Activated CD4-positive, alpha-beta memory T cell treated with anti-CD3 and anti-CD28 coated beads for 36 hours (primary cell): ENCODE measurements at regions of chr1 and their contacts with region 1.

Region 1: DNA sequence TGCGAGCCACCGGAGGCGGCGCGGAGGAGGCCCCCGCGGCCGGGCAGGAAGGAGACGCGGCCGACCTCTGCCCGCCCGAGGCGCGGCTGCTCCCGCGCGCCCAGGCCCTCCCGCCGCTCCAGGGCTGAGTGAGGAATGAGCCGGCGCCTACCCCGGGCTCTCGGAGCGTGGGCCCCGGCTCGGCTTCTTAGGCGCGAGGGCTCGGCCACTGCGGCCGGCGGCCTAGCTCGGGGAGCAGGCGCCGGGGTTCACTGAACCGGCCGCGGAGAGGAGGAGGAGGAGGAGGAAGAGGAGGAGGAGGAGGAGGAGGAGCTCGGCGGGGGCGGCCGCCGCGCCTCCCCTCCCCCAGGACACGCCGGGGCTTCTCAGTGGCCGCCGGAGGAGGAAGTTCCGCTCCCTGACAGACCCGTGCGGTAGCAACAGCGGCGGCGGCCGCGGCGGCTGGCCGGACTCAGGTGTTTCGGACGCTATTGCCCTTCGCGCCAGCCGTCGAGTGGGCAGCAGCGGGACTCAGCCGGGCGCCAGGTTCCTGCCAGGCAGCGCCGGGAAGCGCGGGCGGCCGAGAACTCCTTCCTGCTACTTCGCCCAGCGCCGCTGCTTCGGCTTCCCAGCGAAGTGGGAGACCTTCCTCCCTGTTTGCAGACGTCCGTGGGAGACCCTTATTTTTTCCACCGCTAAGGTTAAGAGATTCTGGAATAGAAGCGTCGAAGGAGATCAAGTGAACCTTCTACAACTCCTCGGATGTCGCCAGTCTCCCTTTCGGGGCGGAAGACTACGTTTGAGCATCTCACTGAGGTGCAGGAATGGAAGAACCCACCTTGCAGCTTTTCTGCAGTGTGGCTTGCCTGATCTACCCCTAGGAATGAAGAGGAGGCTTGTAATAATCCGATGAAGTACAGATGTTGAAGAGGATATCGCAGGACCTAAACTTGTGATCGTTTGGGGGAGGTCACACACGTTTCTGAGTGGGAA is at the start of gene MAN1A2:
- DNase-seq: peak; percentile 79
- H3K4me3 Mint-ChIP-seq: peak within 1 kb of the TSS; percentile 94
- H3K27ac Mint-ChIP-seq: peak within 1 kb of the TSS; percentile 96
- H3K4me1 Mint-ChIP-seq: peaks cover 50% of the 10 kb centered on the region
- H3K27me3 Mint-ChIP-seq: no peaks in the 10 kb centered on the region
- total RNA-seq, gene MAN1A2: 18.3 to 22.5 TPM

Region 2: GRCh38 chr1:116556289-116557006 is 810.9 kb before region 1 on chr1:
- CTCF ChIA-PET with region 1: no interaction called
- POLR2A ChIA-PET with region 1: no interaction called
- intact Hi-C with region 1: loop called (anchors 10 kb)
- DNase-seq: peak; percentile 91
- H3K4me3 Mint-ChIP-seq: peak overlapping the region; percentile 9
- H3K27ac Mint-ChIP-seq: peak overlapping the region; percentile 91
- H3K4me1 Mint-ChIP-seq: peaks cover 80% of the 10 kb centered on the region
- H3K27me3 Mint-ChIP-seq: no peaks in the 10 kb centered on the region

Region 3: DNA sequence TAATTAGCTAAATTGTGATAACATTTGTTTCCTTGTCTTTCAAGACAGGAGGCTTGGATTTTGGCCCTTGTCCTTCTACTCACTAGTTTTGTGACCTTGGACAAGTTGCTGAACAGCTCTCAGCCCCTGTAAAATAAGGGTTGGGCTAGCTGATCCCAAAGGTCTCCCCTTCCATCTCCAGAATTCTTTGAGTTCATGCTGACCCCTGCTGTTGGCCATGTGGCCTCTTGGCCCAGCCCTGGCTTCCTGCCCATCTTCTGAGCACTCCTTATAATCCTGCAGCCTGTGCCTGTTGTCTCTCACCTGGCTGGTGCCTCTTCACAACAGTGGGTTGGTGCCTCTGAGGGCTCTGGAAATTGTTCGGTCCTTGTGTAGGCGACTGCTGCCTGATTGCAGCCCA is 447.5 kb before region 1 on chr1:
- CTCF ChIA-PET with region 1: no interaction called
- POLR2A ChIA-PET with region 1: no interaction called
- intact Hi-C with region 1: no loop called
- DNase-seq: no peak
- H3K4me3 Mint-ChIP-seq: no peak overlapping the region
- H3K27ac Mint-ChIP-seq: no peak overlapping the region
- H3K4me1 Mint-ChIP-seq: peaks cover 7% of the 10 kb centered on the region
- H3K27me3 Mint-ChIP-seq: peaks cover 3% of the 10 kb centered on the region

Region 4: DNA sequence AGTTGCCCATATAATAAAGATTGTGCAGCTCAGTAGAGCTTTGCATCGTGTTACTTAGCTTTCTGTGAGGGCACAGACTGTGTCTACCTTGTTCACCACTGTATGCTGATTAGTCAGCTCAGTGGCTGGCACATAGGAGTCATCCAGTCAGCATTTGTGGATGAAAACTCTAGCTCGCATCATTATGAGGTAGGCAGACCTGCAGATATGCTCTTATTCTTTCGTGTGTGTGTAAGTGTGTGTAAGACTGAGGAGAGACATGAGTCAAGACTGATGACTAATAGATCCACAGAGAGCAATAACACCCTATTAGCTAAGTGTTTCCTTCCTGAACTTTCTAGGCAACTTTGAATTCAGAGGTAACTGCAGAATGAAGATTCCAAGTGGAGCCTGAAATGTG is 290.1 kb before region 1 on chr1:
- CTCF ChIA-PET with region 1: no interaction called
- POLR2A ChIA-PET with region 1: no interaction called
- intact Hi-C with region 1: loop called (anchors 5 kb)
- DNase-seq: peak; percentile 79
- H3K4me3 Mint-ChIP-seq: no peak overlapping the region
- H3K27ac Mint-ChIP-seq: peak overlapping the region; percentile 71
- H3K4me1 Mint-ChIP-seq: peaks cover 30% of the 10 kb centered on the region
- H3K27me3 Mint-ChIP-seq: no peaks in the 10 kb centered on the region

Region 5: DNA sequence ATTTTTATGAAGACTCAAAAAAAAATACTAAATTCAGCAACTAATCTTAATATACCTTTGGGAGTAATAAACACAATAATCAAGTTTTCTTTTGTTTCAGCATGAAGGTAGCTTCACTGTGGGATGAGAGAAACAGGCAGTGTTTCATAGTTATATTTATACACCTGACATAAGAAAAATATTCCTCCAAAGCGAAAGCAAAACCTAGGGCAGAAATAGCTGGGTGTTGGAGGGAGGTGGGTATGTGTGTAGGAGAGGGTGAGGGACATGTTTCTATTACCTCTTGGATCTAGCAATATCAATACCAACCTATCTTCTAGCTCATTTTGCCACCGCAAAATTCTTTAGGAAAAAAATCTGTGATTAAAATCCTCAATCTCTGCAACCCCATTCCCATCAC is 24.9 kb before region 1 on chr1:
- CTCF ChIA-PET with region 1: interaction called, 5 read pairs
- POLR2A ChIA-PET with region 1: no interaction called
- intact Hi-C with region 1: loop called (anchors 2 kb)
- DNase-seq: no peak
- H3K4me3 Mint-ChIP-seq: no peak overlapping the region
- H3K27ac Mint-ChIP-seq: no peak overlapping the region
- H3K4me1 Mint-ChIP-seq: peaks cover 24% of the 10 kb centered on the region
- H3K27me3 Mint-ChIP-seq: peaks cover 1% of the 10 kb centered on the region

Region 6: GRCh38 chr1:117605774-117606648 is 238.7 kb after region 1 on chr1 and contains the start of gene TENT5C:
- CTCF ChIA-PET with region 1: no interaction called
- POLR2A ChIA-PET with region 1: no interaction called
- intact Hi-C with region 1: loop called (anchors 1 kb)
- DNase-seq: peak; percentile 99
- H3K4me3 Mint-ChIP-seq: peak within 1 kb of the TSS; percentile 91
- H3K27ac Mint-ChIP-seq: peak within 1 kb of the TSS; percentile 94
- H3K4me1 Mint-ChIP-seq: peaks cover 41% of the 10 kb centered on the region
- H3K27me3 Mint-ChIP-seq: no peaks in the 10 kb centered on the region
- total RNA-seq, gene TENT5C: 13.8 to 14.0 TPM

Region 7: DNA sequence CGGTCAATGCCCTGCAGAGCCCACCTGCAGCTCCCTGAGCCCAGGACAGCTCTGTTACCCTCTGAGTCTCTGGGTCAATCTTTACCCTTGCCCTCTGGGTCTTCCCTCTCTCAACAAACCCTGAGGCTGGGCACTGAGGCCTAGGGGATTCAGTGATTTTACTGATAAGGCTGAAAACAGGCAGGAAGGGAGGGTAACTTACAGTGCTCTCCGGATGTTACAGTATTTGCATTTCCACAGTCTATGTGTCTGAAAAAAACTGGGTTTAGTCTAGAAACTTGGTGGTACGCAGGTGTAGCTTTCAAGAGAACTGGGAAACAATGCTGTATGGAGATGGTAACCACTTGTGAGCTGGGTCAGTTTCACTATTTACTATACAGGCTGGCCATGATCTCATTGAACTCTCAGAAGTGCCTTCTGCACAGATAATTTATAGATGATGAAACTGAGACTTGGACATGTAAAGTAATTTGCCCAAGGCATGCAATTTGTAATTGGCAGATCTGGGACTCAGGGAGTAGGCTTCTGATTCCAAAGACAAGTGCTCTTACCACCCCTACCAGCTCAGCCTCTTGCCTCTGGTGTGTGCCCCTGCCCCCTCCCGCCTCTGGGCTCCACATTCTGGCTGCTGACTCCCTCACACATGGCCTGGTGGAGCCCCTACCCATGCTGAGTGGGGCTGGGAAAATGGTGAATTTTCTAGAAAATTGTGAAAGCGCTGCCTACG is 287.3 kb after region 1 on chr1:
- CTCF ChIA-PET with region 1: no interaction called
- POLR2A ChIA-PET with region 1: no interaction called
- intact Hi-C with region 1: loop called (anchors 2 kb)
- DNase-seq: no peak
- H3K4me3 Mint-ChIP-seq: no peak overlapping the region
- H3K27ac Mint-ChIP-seq: peak overlapping the region; percentile 78
- H3K4me1 Mint-ChIP-seq: peaks cover 78% of the 10 kb centered on the region
- H3K27me3 Mint-ChIP-seq: peaks cover 2% of the 10 kb centered on the region